Activated CD4-positive, alpha-beta memory T cell treated with anti-CD3 and anti-CD28 coated beads, Interleukin-2, amount 10 ng/mL, durations not matched to agents 7 days and 5 days (primary cell): ENCODE measurements at regions of chr17 and their contacts with region 1.

Region 1: GRCh38 chr17:10697092-10698081 is at the starts of genes ADPRM and SCO1:
- DNase-seq: peak; percentile 92
- H3K4me3 Mint-ChIP-seq: peak within 1 kb of the TSS; percentile 94
- H3K27ac Mint-ChIP-seq: peak within 1 kb of the TSS; percentile 92
- H3K4me1 Mint-ChIP-seq: peaks cover 59% of the 10 kb centered on the region
- H3K27me3 Mint-ChIP-seq: no peaks in the 10 kb centered on the region
- total RNA-seq, gene ADPRM: 15.3 to 15.4 TPM
- total RNA-seq, gene SCO1: 19.9 to 24.5 TPM

Region 2: DNA sequence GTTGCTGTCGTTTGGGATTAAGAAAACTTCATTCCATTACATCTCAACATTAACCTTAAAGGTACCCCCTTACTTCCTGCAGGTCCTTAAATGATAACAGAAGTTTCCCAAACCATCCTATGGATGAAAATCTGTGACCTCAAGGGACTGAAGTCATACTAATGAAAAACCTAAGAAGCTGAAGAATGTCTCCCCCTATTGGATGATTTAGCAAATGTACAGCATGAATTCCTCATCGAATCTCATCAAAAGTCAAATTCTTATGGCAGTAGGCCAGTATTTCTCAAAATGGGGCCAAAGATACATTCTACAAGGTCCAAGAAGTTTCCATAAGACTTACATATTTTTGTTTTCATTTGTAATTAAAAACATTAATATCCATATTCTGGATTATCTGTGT is 13.5 kb before region 1 on chr17:
- CTCF ChIA-PET with region 1: interaction called, 23 read pairs
- POLR2A ChIA-PET with region 1: interaction called, 4 read pairs
- DNase-seq: no peak
- H3K4me3 Mint-ChIP-seq: no peak overlapping the region
- H3K27ac Mint-ChIP-seq: no peak overlapping the region
- H3K4me1 Mint-ChIP-seq: peaks cover 5% of the 10 kb centered on the region
- H3K27me3 Mint-ChIP-seq: no peaks in the 10 kb centered on the region